CD4-positive, alpha-beta memory T cell (primary cell): ENCODE measurements at regions of chr7 and their contacts with region 1.

Region 1: DNA sequence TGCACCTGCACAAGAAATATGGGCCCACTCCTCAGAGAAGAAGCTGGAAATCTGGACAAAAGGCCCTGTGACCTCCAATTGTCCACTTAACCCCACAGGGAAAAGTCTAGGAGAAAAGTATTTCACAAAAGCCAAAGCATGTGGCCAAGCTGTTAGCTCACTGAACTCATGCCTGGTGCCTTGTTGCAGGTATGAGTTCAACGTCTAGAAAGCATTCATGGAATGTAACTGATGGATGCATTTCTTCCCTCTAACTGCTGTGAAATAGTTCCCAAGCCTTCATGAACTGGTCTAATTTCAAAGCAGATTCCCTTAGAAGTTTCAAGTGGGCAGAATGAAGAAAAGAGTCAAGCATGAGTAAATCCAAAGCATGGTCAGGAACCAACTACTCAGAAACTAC is 116.4 kb downstream of the HERPUD2 start:
- DNase-seq: no peak
- H3K4me3 ChIP-seq: no peak overlapping the region
- H3K4me3 Mint-ChIP-seq: no peak overlapping the region
- H3K27ac ChIP-seq: no peak overlapping the region
- H3K27ac Mint-ChIP-seq: no peak overlapping the region
- H3K4me1 ChIP-seq: no peaks in the 10 kb centered on the region
- H3K4me1 Mint-ChIP-seq: no peaks in the 10 kb centered on the region
- H3K27me3 ChIP-seq: no peaks in the 10 kb centered on the region
- H3K27me3 Mint-ChIP-seq: peaks cover 0 to 15% of the 10 kb centered on the region in 2 donors

Region 2: GRCh38 chr7:35596061-35596460 is 17.5 kb after region 1 on chr7:
- CTCF ChIA-PET with region 1: interaction called, 10 read pairs
- POLR2A ChIA-PET with region 1: no interaction called
- intact Hi-C with region 1: no loop called
- DNase-seq: no peak
- H3K4me3 ChIP-seq: no peak overlapping the region
- H3K4me3 Mint-ChIP-seq: no peak overlapping the region
- H3K27ac ChIP-seq: no peak overlapping the region
- H3K27ac Mint-ChIP-seq: no peak overlapping the region
- H3K4me1 ChIP-seq: no peaks in the 10 kb centered on the region
- H3K4me1 Mint-ChIP-seq: no peaks in the 10 kb centered on the region
- H3K27me3 ChIP-seq: no peaks in the 10 kb centered on the region
- H3K27me3 Mint-ChIP-seq: no peaks in the 10 kb centered on the region